ENCODE measurements at regions of chr11 and their contacts with region 1.

Region 1: GRCh38 chr11:95465887-95466286 is 234.9 kb upstream of the SESN3 start:
- DNase-seq: no peak
- ATAC-seq: no peak
- H3K4me3 ChIP-seq: no peak overlapping the region
- H3K27ac ChIP-seq: no peak overlapping the region
- H3K4me1 ChIP-seq: no peaks in the 10 kb centered on the region
- H3K27me3 ChIP-seq: no peaks in the 10 kb centered on the region; the same call in 1 of the 2 replicates
- CTCF ChIP-seq: no peak
- POLR2A ChIP-seq: no peak
- RAD21 ChIP-seq: no peak

Region 2: GRCh38 chr11:95516786-95517185 is 50.9 kb after region 1 on chr11:
- CTCF ChIA-PET with region 1: no interaction called
- POLR2A ChIA-PET with region 1: no interaction called
- RAD21 ChIA-PET with region 1: no interaction called
- intact Hi-C with region 1: loop called (anchors 5 kb)
- DNase-seq: no peak
- ATAC-seq: no peak
- H3K4me3 ChIP-seq: no peak overlapping the region
- H3K27ac ChIP-seq: no peak overlapping the region
- H3K4me1 ChIP-seq: no peaks in the 10 kb centered on the region
- H3K27me3 ChIP-seq: peaks cover 28% of the 10 kb centered on the region; the same call in 1 of the 2 replicates
- CTCF ChIP-seq: no peak
- POLR2A ChIP-seq: no peak
- RAD21 ChIP-seq: no peak